Esophagus squamous epithelium (tissue), 5 donors: ENCODE measurements at regions of chr1 and their contacts with region 1.

Region 1: DNA sequence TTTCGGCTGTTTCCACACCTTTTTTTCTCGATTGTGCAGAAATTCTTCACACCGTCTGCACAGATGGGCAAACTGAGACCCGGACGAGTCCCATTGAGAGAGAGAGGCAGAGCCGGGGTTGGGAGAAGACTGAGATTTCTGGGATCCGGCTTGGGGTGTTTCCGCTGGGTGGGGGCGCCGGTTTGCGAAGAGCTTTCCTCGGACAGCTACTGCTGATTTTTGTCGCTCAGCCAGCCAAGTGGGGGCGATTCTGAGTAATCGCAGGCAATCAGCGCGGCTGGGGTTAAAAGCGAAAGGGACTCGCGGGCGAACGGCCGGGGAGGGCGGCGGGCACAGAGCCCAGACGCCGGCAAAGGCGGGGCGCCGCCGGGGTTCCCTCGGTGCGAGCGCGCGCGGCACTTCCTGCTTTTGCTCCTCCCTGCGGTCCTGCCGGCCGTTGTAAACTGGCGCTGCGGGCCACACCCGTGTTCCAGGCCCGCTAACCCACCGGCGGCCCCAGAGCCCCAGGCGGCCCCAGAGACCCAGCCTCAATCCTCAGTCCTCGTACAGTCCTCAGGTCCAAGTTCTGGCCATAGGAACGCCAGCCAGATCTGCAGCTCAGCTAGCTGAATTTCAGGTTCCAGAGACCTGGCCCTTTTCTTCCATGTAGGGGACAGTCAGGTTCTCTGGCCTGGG is 32.4 kb upstream of the JUN start:
- DNase-seq: peak; percentile 58
- H3K4me3 ChIP-seq: peak overlapping the region; percentile 48 to 77 (median 64)
- H3K27ac ChIP-seq: peak overlapping the region; percentile 91 to 98 (median 94)
- H3K4me1 ChIP-seq: peaks cover 27 to 68% (median 37%) of the 10 kb centered on the region in 3 donors
- H3K27me3 ChIP-seq: no peaks in the 10 kb centered on the region
- CTCF ChIP-seq: peak in 2 of 6 experiments; percentile 7 to 8
- POLR2A ChIP-seq: peak in 2 of 4 donors; percentile 52 to 68

Region 2: DNA sequence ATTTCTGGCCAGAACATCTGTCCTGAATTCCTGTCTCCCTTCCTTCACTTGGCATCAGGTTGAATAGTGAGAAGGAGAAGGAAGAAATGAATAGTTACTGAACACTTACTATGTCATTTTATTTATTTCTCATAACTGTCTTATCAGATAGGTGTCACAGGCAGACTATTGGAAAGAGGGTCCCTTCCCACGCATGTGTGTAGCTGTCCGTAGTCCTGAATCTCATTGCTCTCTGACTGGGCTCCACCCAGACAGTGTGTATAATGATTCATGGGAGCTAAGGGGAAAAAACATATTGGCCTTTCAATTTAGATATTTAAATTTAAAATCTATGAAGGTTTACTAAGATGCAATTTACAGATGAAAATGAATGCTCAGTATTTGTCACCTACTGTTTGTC is 355.7 kb before region 1 on chr1:
- intact Hi-C with region 1: no loop called
- DNase-seq: no peak
- H3K4me3 ChIP-seq: no peak overlapping the region
- H3K27ac ChIP-seq: no peak overlapping the region
- H3K4me1 ChIP-seq: no peaks in the 10 kb centered on the region
- H3K27me3 ChIP-seq: no peaks in the 10 kb centered on the region
- CTCF ChIP-seq: no peak
- POLR2A ChIP-seq: no peak

Region 3: DNA sequence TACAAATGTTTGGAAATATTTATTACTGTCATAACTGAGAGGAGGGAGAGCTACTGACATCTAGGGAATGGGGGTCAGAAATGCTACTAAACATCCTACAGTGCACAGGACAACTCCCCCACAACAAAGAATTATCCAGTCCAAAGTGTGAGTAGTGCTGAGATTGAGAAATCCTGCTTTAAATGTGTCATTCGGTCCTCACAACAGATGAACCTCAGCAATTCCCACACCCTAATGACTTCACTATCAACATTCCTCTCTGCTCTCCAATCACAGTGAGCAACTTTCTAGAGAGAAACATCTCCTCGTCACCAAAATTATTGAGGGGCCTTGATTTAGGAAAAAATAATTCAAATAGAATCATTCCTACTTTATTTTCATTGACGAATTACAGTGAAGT is 287.7 kb before region 1 on chr1:
- intact Hi-C with region 1: no loop called
- DNase-seq: no peak
- H3K4me3 ChIP-seq: no peak overlapping the region
- H3K27ac ChIP-seq: no peak overlapping the region
- H3K4me1 ChIP-seq: peaks cover 0 to 5% (median 0%) of the 10 kb centered on the region in 3 donors
- H3K27me3 ChIP-seq: no peaks in the 10 kb centered on the region
- CTCF ChIP-seq: no peak
- POLR2A ChIP-seq: no peak

Region 4: DNA sequence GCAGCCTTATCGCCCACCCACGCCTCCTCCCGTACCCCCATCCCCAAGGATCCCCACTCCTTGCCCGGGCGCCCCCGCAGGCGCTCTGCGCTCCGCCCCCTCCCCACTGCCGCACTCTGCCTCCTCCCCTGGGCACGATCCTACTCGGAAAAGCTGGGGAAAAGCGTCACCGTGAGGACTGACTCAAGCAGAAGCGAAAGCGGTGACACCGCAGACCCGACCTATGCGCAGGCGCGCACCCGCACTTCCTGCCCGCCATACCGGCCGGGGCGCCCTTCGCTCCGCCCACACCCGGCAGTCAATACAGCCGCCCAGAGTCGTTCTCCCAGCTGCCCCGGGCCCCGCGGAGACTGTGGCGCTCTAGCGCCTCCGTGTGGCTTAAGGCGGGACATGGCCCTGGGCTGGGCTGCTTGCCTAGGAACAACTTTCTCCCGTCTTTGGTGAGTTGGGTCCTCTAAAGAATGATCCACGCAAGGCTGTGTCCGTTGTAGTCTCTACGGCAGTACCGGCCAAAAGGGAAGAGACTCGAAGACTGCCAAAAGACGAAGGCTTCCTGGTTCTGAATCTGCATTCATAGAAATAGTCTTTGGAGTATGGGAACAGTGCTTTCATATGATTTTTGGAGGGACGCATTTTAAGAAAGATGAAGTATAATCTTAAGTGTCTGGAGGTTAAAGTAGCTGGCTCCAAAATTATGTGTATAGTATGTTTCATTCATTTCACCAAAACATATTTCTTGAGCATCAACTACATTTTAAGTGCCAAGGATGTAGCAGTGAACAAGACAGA is 269.5 kb before region 1 on chr1 and contains the start of gene OMA1:
- intact Hi-C with region 1: no loop called
- DNase-seq: peak; percentile 76
- H3K4me3 ChIP-seq: peak within 1 kb of the TSS; percentile 82 to 92 (median 86)
- H3K27ac ChIP-seq: peak within 1 kb of the TSS; percentile 99 to 100 (median 100)
- H3K4me1 ChIP-seq: peaks cover 0 to 28% (median 6%) of the 10 kb centered on the region in 3 donors
- H3K27me3 ChIP-seq: no peaks in the 10 kb centered on the region
- CTCF ChIP-seq: peak; percentile 92 to 99 (median 98)
- POLR2A ChIP-seq: peak in 3 of 4 donors; percentile 89 to 95 (median 90)
- total RNA-seq, gene OMA1: 24.1 to 41.4 (median 30.5) TPM

Region 5: DNA sequence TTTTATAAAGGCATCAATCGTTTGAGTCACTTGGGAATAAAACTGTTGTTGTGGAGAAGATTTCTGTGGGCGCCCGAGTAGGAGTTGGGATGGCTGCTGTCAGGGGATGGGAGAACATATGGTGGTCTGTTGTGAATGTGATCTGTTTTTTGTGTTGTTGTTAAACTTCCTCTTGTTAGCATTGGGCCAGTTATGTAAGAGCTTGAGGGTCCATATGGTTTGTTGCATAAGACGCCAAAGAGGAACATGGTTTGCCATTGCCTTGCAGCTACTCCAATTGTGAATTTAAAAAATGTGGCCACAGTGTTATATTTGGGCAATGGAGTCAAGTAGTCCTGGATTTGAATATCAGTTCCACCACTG is 103.7 kb after region 1 on chr1:
- intact Hi-C with region 1: loop called (anchors 10 kb)
- DNase-seq: no peak
- H3K4me3 ChIP-seq: no peak overlapping the region
- H3K27ac ChIP-seq: no peak overlapping the region
- H3K4me1 ChIP-seq: peaks cover 0 to 29% (median 24%) of the 10 kb centered on the region in 3 donors
- H3K27me3 ChIP-seq: no peaks in the 10 kb centered on the region
- CTCF ChIP-seq: no peak
- POLR2A ChIP-seq: no peak

Region 6: GRCh38 chr1:59057211-59057694 is 241.0 kb after region 1 on chr1:
- intact Hi-C with region 1: loop called (anchors 10 kb)
- DNase-seq: no peak
- H3K4me3 ChIP-seq: peak overlapping the region in 2 of 4 donors; percentile 21 to 29
- H3K27ac ChIP-seq: peak overlapping the region; percentile 70 to 90 (median 81)
- H3K4me1 ChIP-seq: peaks cover 29 to 73% (median 31%) of the 10 kb centered on the region in 3 donors
- H3K27me3 ChIP-seq: no peaks in the 10 kb centered on the region
- CTCF ChIP-seq: no peak
- POLR2A ChIP-seq: peak in 1 of 4 donors; percentile 42